ENCODE measurements at regions of chr13 and their contacts with region 1.

Region 1: GRCh38 chr13:19959831-19960652 is 1.5 kb downstream of the ZMYM2 start:
- DNase-seq: peak; percentile 95
- ATAC-seq: peak; percentile 57
- H3K4me3 ChIP-seq: peak overlapping the region; percentile 81
- H3K27ac ChIP-seq: peak overlapping the region; percentile 37
- H3K4me1 ChIP-seq: peaks cover 31% of the 10 kb centered on the region
- H3K27me3 ChIP-seq: no peaks in the 10 kb centered on the region
- CTCF ChIP-seq: peak; percentile 83

Region 2: GRCh38 chr13:19782049-19782726 is 177.9 kb before region 1 on chr13:
- CTCF ChIA-PET with region 1: no interaction called
- POLR2A ChIA-PET with region 1: no interaction called
- intact Hi-C with region 1: loop called (anchors 5 kb)
- DNase-seq: peak; percentile 26
- ATAC-seq: peak; percentile 48
- H3K4me3 ChIP-seq: peak overlapping the region; percentile 99
- H3K27ac ChIP-seq: peak overlapping the region; percentile 72
- H3K4me1 ChIP-seq: no peaks in the 10 kb centered on the region
- H3K27me3 ChIP-seq: no peaks in the 10 kb centered on the region
- CTCF ChIP-seq: no peak

Region 3: DNA sequence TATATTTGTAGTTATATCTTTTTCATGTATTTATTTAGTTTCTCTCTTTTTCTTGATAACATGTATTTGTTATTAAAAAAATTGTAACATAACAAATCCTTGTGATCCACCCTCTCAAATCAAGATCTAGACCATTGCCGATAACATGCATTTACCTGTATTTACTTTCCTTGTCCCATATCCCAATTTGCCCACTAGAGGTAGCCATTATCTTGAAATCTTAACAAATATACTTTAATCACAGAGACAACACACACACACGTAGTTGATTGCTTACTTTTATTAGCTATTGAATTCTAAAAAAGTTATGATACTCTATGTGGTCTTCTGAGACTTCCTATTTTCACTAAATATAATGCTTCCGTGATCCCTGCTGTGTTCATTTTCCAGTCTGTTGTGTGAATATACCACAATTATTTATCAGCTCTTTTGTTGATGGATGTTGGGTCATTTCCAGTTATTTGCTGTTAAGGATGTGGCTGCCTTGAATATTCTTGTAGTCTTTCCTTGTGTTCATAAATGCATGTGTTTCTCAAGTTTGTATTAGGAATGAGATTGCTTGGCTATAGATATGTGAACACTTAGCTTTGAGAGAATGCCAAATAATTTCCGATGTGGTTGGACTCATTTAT is 32.8 kb before region 1 on chr13:
- CTCF ChIA-PET with region 1: interaction called, 13 read pairs
- POLR2A ChIA-PET with region 1: no interaction called
- intact Hi-C with region 1: loop called (anchors 1 kb)
- DNase-seq: peak; percentile 71
- ATAC-seq: peak; percentile 87
- H3K4me3 ChIP-seq: peak overlapping the region; percentile 15; the same call in 1 of the 2 replicates
- H3K27ac ChIP-seq: no peak overlapping the region
- H3K4me1 ChIP-seq: no peaks in the 10 kb centered on the region
- H3K27me3 ChIP-seq: no peaks in the 10 kb centered on the region
- CTCF ChIP-seq: peak; percentile 91

Measured in PC-3 (cell line).